Activated CD4-positive, alpha-beta T cell treated with anti-CD3 and anti-CD28 coated beads for 36 hours (primary cell): ENCODE measurements at regions of chr7 and their contacts with region 1.

Region 1: GRCh38 chr7:149662591-149663095 is 110.7 kb downstream of the ZNF467 start:
- DNase-seq: peak; percentile 86
- ATAC-seq: peak; percentile 96
- H3K4me3 Mint-ChIP-seq: no peak overlapping the region
- H3K27ac Mint-ChIP-seq: no peak overlapping the region
- H3K4me1 Mint-ChIP-seq: no peaks in the 10 kb centered on the region
- H3K27me3 Mint-ChIP-seq: peaks cover 34% of the 10 kb centered on the region

Region 2: DNA sequence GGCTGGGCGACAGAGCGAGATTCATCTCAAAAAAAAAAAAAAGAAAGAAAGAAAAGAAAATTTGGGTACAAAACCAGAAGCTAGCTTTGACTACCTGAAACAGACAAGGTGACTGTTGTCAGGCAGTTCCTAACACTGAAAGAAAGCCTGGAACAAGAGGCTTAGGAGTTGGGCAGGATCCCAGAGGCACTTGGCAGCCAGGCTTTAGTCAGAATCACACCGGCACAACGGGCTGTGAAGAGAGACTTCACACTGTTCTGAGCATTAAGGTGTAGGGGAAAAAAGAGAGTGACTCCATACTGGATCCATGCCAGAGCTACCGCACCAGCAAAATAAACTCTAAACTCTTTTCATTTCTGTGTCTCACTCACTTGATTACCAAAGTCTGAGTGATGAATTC is 20.1 kb before region 1 on chr7:
- CTCF ChIA-PET with region 1: interaction called, 28 read pairs
- POLR2A ChIA-PET with region 1: no interaction called
- intact Hi-C with region 1: no loop called
- DNase-seq: no peak
- ATAC-seq: no peak
- H3K4me3 Mint-ChIP-seq: no peak overlapping the region
- H3K27ac Mint-ChIP-seq: no peak overlapping the region
- H3K4me1 Mint-ChIP-seq: no peaks in the 10 kb centered on the region
- H3K27me3 Mint-ChIP-seq: peaks cover 8% of the 10 kb centered on the region

Region 3: DNA sequence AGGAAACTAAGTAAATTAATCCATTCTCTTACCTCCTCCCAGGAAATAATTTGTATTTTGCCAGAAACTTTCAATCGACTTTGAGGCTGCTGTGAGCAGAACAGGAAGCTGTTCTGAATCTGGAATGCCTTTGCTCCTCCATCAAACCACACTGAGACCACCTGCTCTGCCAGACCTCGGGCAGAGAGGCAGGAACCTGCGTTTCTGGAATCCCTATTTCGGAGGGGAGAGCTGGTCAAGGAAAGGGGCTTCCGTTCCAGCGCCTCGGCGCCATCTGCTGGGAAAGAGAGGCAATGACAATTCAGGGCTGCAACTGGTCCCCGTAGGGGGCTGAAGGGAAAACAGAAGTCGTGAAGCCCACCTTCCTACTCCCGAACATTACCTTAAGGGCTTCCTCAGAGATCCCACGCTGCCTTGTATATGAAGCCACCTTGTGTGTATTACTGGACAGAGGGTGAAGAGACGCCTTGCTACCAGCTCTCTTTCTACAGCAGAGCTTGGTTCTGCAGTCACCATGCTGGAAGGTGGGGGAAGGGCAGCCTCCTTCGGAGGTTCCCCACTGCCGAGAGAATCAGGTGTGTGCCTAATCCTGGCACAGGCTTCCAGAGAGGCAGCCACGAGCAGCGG is 79.5 kb after region 1 on chr7:
- CTCF ChIA-PET with region 1: interaction called, 74 read pairs
- POLR2A ChIA-PET with region 1: interaction called, 5 read pairs
- intact Hi-C with region 1: loop called (anchors 1 kb)
- DNase-seq: peak; percentile 79
- ATAC-seq: peak; percentile 88
- H3K4me3 Mint-ChIP-seq: peak overlapping the region; percentile 65
- H3K27ac Mint-ChIP-seq: no peak overlapping the region
- H3K4me1 Mint-ChIP-seq: peaks cover 10% of the 10 kb centered on the region
- H3K27me3 Mint-ChIP-seq: peaks cover 23% of the 10 kb centered on the region

Region 4: DNA sequence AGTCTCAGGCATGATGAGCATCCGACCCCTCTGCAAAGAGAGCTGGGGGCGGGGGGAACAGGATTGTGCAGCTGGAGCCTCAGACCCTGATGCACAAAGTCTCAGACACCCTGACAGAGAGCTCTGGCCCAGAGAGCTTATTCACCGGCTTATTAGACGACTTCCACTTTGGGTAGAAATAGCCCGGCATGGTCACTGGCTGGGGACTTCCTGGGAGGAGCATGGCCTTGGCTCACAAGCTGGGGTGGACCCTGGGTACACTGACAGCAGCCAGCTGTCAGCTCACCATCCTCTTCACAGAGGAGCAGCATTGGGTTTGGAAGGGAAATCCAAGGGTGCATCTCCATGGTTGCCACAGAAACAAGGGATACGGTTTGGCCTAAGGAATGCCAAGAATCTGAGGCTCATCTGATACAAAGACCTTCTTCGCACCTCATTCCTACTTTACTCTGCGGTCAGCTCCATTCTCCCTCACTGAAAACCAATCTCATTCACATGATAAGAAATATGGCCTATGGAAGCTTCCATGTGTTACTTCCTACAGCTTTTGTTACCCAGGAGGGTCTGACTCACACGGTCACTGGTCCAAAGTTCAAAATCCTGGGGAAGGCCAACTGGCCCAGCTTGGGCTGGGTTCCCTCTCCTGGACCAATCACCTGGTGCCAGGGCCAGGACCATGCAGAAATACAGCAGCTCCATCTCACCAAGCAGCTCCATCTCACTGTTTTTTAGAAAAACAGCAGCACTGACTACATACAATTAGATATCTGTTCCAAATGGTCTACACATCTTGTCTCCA is 85.6 kb after region 1 on chr7:
- CTCF ChIA-PET with region 1: interaction called, 32 read pairs
- POLR2A ChIA-PET with region 1: no interaction called
- intact Hi-C with region 1: no loop called
- DNase-seq: no peak
- ATAC-seq: no peak
- H3K4me3 Mint-ChIP-seq: no peak overlapping the region
- H3K27ac Mint-ChIP-seq: no peak overlapping the region
- H3K4me1 Mint-ChIP-seq: no peaks in the 10 kb centered on the region
- H3K27me3 Mint-ChIP-seq: peaks cover 3% of the 10 kb centered on the region

Region 5: GRCh38 chr7:149799397-149800171 is 136.9 kb after region 1 on chr7:
- CTCF ChIA-PET with region 1: interaction called, 8 read pairs
- POLR2A ChIA-PET with region 1: no interaction called
- intact Hi-C with region 1: loop called in 1 of 2 experiments (anchors 1 kb)
- DNase-seq: peak; percentile 80
- ATAC-seq: peak; percentile 66
- H3K4me3 Mint-ChIP-seq: no peak overlapping the region
- H3K27ac Mint-ChIP-seq: no peak overlapping the region
- H3K4me1 Mint-ChIP-seq: no peaks in the 10 kb centered on the region
- H3K27me3 Mint-ChIP-seq: no peaks in the 10 kb centered on the region